ENCODE measurements at regions of chr9 and their contacts with region 1.

Region 1: GRCh38 chr9:133347985-133348717 is at the starts of genes MED22 and RPL7A:
- DNase-seq: peak; percentile 72 to 96 (median 85)
- ATAC-seq: peak; percentile 77
- H3K4me3 ChIP-seq: peak within 1 kb of the TSS; percentile 100
- H3K27ac ChIP-seq: peak within 1 kb of the TSS; percentile 98
- H3K4me1 ChIP-seq: peaks cover 16 to 31% of the 10 kb centered on the region in 2 experiments; a peak in 4 of 5 replicates
- H3K27me3 ChIP-seq: no peaks in the 10 kb centered on the region
- CTCF ChIP-seq: peak in 1 of 3 experiments; percentile 16; a peak in 1 of 6 replicates
- EP300 ChIP-seq: no peak
- POLR2A ChIP-seq: peak; percentile 99
- RAD21 ChIP-seq: no peak
- polyA plus RNA-seq, gene MED22: 0.73 to 1.4 TPM
- polyA plus RNA-seq, gene RPL7A: 1,935 to 2,418 TPM

Region 2: GRCh38 chr9:133334161-133334560 is 14.0 kb before region 1 on chr9:
- CTCF ChIA-PET with region 1: no interaction called
- POLR2A ChIA-PET with region 1: interaction called, 18 read pairs
- in situ Hi-C with region 1: no loop called
- intact Hi-C with region 1: no loop called
- DNase-seq: no peak
- ATAC-seq: no peak
- H3K4me3 ChIP-seq: peak overlapping the region; percentile 77; the same call in 1 of the 2 replicates
- H3K27ac ChIP-seq: no peak overlapping the region
- H3K4me1 ChIP-seq: peaks cover 6 to 42% of the 10 kb centered on the region in 2 experiments; a peak in 4 of 5 replicates
- H3K27me3 ChIP-seq: no peaks in the 10 kb centered on the region; a peak in 1 of 5 replicates
- CTCF ChIP-seq: no peak
- EP300 ChIP-seq: no peak
- POLR2A ChIP-seq: no peak; the same call in 1 of the 2 replicates
- RAD21 ChIP-seq: no peak

Region 3: DNA sequence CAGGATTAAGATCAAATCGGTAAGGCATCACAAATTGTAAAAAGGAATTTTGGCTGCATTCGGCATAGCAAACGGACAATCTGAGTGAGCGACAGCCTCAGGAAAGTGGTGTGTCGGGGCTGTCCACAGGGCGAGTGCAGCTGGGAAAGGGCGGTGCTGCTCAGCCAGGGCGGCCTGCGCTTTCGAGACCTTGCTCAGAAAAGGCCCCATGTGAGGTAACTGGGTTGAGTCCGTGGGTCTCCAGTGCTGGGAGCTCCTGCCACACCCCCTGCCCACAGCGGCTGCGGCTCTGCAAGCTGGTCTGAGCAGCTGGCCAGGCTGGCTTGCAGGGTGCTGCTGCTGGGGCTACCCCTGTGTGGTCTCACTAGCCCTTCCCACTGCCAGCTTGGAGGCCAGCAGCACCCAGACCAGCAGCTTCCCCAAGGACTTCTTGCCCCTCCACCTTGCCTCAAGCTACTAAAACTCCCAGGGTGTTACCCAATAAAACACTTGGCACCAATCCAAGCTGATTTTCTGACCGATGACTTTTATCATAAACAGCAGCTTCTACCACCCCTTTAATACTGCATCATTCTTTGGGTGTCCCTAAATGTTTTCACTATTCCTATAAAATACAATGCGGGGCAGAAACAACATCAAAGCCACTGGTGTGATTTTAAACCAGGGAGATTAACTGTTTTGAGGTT is 14.4 kb after region 1 on chr9:
- CTCF ChIA-PET with region 1: no interaction called
- POLR2A ChIA-PET with region 1: interaction called, 33 read pairs
- in situ Hi-C with region 1: no loop called
- intact Hi-C with region 1: no loop called
- DNase-seq: no peak
- ATAC-seq: peak; percentile 6; the same call in 2 of the 3 replicates
- H3K4me3 ChIP-seq: no peak overlapping the region
- H3K27ac ChIP-seq: no peak overlapping the region
- H3K4me1 ChIP-seq: peaks cover 9 to 37% of the 10 kb centered on the region in 2 experiments; a peak in 4 of 5 replicates
- H3K27me3 ChIP-seq: no peaks in the 10 kb centered on the region
- CTCF ChIP-seq: no peak
- EP300 ChIP-seq: no peak
- POLR2A ChIP-seq: peak; percentile 15; the same call in 1 of the 2 replicates
- RAD21 ChIP-seq: no peak

Region 4: GRCh38 chr9:133394687-133395271 is 46.6 kb after region 1 on chr9:
- CTCF ChIA-PET with region 1: no interaction called
- POLR2A ChIA-PET with region 1: no interaction called
- in situ Hi-C with region 1: no loop called
- intact Hi-C with region 1: no loop called
- DNase-seq: no peak
- ATAC-seq: no peak
- H3K4me3 ChIP-seq: no peak overlapping the region
- H3K27ac ChIP-seq: no peak overlapping the region
- H3K4me1 ChIP-seq: peaks cover 0 to 7% of the 10 kb centered on the region in 2 experiments; a peak in 2 of 5 replicates
- H3K27me3 ChIP-seq: peaks cover 22 to 49% of the 10 kb centered on the region in 2 experiments; a peak in 4 of 5 replicates
- CTCF ChIP-seq: peak in 1 of 3 experiments; percentile 18; a peak in 1 of 6 replicates
- EP300 ChIP-seq: no peak
- POLR2A ChIP-seq: no peak
- RAD21 ChIP-seq: no peak

Region 5: GRCh38 chr9:133433351-133433843 is 85.2 kb after region 1 on chr9:
- CTCF ChIA-PET with region 1: no interaction called
- POLR2A ChIA-PET with region 1: no interaction called
- in situ Hi-C with region 1: no loop called
- intact Hi-C with region 1: no loop called
- DNase-seq: no peak
- ATAC-seq: no peak
- H3K4me3 ChIP-seq: no peak overlapping the region
- H3K27ac ChIP-seq: no peak overlapping the region
- H3K4me1 ChIP-seq: peaks cover 0 to 22% of the 10 kb centered on the region in 2 experiments; a peak in 3 of 5 replicates
- H3K27me3 ChIP-seq: peaks cover 21 to 48% of the 10 kb centered on the region in 2 experiments
- CTCF ChIP-seq: peak; percentile 15 to 32 (median 25); a peak in 4 of 6 replicates
- EP300 ChIP-seq: no peak
- POLR2A ChIP-seq: no peak
- RAD21 ChIP-seq: no peak

Region 6: DNA sequence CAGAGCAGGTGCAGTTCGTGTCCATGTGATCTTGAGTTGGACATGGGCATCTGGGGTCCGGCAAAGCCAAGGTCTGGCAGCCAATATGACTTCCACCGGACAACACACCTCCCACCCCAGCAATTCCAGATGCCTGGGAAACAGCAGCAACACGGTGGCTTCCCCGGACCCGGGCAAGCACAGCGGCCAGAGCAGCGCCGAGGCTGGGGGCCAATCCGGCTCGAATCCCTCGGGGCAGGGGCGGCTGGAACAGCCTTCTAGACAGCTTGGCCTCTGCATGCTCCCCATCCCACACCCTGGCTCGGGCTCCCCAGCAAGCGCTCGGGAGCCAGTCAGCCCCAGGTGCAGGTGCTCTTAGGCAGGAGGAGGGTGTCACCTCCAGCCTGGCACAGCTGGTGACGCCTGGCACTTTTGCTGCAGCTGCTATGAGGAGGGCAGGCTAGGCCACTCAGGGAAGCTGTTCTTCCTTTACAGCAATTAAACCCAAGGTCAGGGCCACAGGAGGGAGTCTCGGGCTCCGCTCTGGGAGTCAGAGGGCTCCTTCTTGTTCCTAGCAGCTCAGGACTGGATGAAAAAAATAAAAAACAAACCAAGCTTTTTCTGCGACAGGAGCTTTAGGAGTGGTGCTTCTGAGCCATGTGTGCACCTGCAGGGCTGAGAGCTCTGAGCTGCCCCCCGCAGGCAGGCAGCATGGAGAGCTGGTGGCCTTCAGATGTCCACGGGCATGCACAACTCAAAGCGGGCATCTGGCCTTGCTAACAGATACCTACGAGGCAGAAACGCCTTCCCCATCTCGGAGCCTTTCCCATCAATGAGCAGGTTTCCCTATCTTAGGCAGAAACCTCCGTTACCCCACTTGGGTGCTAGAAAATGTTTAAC is 316.3 kb after region 1 on chr9:
- CTCF ChIA-PET with region 1: no interaction called
- POLR2A ChIA-PET with region 1: no interaction called
- in situ Hi-C with region 1: no loop called
- intact Hi-C with region 1: no loop called
- DNase-seq: no peak
- ATAC-seq: no peak
- H3K4me3 ChIP-seq: no peak overlapping the region
- H3K27ac ChIP-seq: no peak overlapping the region
- H3K4me1 ChIP-seq: no peaks in the 10 kb centered on the region; a peak in 1 of 5 replicates
- H3K27me3 ChIP-seq: peaks cover 8 to 68% of the 10 kb centered on the region in 2 experiments; a peak in 4 of 5 replicates
- CTCF ChIP-seq: no peak
- EP300 ChIP-seq: no peak
- POLR2A ChIP-seq: no peak
- RAD21 ChIP-seq: no peak